ENCODE measurements at regions of chr3 and their contacts with region 1.

Region 1: DNA sequence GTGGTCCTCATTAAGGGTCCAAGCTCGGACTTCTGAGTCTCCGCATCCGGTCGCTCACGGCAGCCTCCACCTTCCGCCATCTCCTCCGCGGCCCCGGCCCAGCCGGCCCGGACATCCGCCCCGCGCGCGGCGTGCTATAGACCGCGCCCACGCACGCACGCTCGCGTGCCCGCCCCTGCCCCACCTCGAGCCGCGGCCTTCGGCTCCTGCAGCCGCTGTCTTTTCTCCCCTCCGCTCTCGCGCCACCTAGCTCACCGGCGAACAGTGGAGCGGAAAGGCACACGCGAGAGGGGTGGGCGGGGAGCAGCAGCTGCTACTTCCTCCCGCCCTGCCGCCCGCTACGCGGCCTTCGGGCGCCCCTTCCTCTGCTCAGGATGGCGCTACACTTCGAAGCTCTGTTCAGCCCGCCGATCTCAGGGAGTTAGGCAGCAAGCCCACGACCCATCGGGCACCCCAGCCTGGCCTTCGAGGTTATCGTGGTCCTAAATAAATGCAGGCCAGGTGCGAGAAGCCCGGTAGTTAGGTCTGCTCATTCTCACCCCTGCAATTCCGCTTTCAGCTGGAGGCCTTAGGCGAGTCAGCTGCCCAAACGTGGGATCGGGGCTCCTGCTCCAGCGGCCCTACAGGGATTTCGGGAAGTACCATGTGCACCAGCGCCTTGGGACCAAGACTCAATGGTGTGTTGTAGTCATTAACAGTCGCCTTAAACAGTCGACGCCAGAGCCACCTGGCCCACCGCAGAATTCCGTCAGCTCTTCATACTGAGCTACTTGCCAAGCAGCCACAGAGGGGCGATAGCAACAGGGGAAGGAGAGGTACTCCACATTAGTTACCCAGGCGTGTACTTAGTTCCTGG is at the start of gene USP4:
- DNase-seq: peak; percentile 93
- H3K4me3 Mint-ChIP-seq: peak within 1 kb of the TSS; percentile 92
- H3K27ac Mint-ChIP-seq: peak within 1 kb of the TSS; percentile 100
- H3K4me1 Mint-ChIP-seq: peaks cover 45% of the 10 kb centered on the region
- H3K27me3 Mint-ChIP-seq: no peaks in the 10 kb centered on the region
- total RNA-seq, gene USP4: 84.4 and 90.2 TPM in 2 replicates

Region 2: DNA sequence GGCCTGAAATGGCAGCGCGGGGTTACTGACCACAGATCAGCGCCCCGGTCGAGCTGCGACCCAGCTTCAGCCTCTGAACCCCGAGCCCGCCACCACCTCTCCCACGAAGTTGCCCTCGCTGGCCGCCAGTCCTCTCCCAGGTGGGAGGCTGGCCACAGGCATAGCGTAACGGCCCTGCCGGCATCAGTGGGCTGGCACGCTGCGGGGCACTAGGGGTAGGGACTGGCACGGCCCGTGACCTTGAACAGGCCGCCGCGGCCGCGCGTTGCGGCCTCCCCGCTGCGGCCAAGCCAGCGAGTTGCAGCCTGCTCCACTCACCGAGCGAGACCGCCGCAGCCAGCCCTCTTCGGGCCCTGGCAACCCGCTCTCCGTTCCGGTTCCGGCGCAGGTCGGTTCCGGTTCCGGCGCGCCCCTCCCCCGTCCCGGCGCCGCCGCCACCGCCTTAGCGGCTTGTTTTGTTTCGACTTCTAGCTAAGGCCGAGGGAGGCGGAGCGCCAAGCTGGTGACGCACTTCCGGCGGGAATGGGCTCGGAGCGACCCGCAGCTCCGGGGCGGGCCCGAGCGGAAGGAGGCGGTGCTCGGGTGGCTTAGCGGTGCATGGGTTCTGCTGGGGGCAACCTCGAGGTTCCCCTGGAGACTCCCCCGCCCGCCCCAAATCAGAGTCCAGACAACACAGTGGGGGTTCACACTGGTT is 219.6 kb before region 1 on chr3 and contains the start of gene USP19:
- intact Hi-C with region 1: loop called (anchors 2 kb)
- DNase-seq: peak; percentile 94
- H3K4me3 Mint-ChIP-seq: peak within 1 kb of the TSS; percentile 90
- H3K27ac Mint-ChIP-seq: peak within 1 kb of the TSS; percentile 88
- H3K4me1 Mint-ChIP-seq: peaks cover 10% of the 10 kb centered on the region
- H3K27me3 Mint-ChIP-seq: peaks cover 1% of the 10 kb centered on the region
- total RNA-seq, gene USP19: 57.7 and 59.7 TPM in 2 replicates

Region 3: GRCh38 chr3:49295489-49296058 is 44.6 kb before region 1 on chr3:
- intact Hi-C with region 1: loop called (anchors 2 kb)
- DNase-seq: peak; percentile 9
- H3K4me3 Mint-ChIP-seq: no peak overlapping the region
- H3K27ac Mint-ChIP-seq: no peak overlapping the region
- H3K4me1 Mint-ChIP-seq: peaks cover 3% of the 10 kb centered on the region
- H3K27me3 Mint-ChIP-seq: no peaks in the 10 kb centered on the region

Region 4: DNA sequence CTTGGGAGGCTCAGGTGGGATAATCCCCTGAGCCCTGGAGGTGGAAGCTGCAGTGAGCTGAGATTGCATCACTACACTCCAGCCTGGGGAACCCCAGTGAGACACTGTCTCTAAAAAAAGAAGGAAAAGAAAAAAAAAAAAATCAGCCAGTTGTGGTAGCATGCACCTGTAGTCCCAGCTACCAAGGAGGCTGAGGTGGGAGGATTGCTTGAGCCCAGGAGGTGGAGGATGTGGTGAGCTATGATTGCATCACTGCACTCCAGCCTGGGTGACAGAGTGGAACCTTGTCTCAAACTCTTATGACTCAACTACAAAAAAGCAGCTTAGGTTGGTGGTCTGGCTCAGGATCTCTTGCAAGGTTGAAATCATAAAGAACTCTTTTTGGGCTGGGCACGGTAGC is 37.3 kb after region 1 on chr3:
- intact Hi-C with region 1: loop called (anchors 2 kb)
- DNase-seq: peak; percentile 49
- H3K4me3 Mint-ChIP-seq: peak overlapping the region; percentile 19
- H3K27ac Mint-ChIP-seq: peak overlapping the region; percentile 82
- H3K4me1 Mint-ChIP-seq: peaks cover 16% of the 10 kb centered on the region
- H3K27me3 Mint-ChIP-seq: no peaks in the 10 kb centered on the region

Region 5: GRCh38 chr3:49428697-49429100 is 88.5 kb after region 1 on chr3:
- intact Hi-C with region 1: loop called (anchors 1 kb)
- DNase-seq: no peak
- H3K4me3 Mint-ChIP-seq: peak overlapping the region; percentile 96
- H3K27ac Mint-ChIP-seq: peak overlapping the region; percentile 94
- H3K4me1 Mint-ChIP-seq: peaks cover 23% of the 10 kb centered on the region
- H3K27me3 Mint-ChIP-seq: no peaks in the 10 kb centered on the region

Region 6: GRCh38 chr3:49469936-49470713 is 130.0 kb after region 1 on chr3 and contains the start of gene DAG1:
- intact Hi-C with region 1: loop called (anchors 1 kb)
- DNase-seq: peak; percentile 96
- H3K4me3 Mint-ChIP-seq: peak within 1 kb of the TSS; percentile 92
- H3K27ac Mint-ChIP-seq: peak within 1 kb of the TSS; percentile 88
- H3K4me1 Mint-ChIP-seq: peaks cover 23% of the 10 kb centered on the region
- H3K27me3 Mint-ChIP-seq: no peaks in the 10 kb centered on the region
- total RNA-seq, gene DAG1: 20.5 and 23.7 TPM in 2 replicates

Region 7: DNA sequence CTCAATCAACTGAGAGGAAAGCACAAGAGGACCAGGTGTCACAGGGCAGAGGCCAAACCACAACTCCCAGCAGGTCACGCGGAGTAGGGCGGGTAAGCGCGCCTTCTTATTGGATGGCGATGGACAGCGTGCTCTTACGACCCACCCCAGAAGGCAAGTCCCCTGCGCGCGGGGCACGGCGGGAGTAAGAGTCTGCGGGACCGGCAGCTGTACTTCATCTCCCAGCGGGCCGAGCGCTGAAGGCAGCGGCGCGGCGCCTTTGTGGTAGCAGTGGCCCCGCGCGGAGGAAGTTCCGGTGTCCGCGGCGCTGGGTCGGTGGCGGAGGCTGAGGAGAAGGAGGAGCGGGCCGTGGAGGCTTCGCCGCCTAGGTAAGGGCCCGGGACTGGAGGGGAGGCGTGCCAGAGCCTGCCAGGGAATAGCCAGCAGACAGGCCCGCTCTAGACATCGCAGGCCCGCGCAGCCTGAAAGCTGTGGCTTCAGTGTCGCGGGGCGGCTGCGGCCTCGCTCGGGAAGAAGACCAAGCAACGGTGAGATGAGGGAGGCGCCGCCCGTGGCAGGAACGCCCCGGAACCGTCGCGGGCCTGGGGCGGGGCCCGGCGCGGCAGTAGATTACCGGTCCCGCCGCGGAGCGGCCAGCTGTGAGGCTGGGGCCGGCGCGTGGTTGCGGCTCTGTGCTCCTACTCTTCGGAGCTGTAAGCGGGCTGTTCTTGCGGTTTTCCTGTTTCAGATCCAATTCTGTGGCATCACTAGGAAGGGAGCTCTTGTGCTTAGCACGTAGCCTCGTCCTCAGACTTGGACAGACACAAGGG is 599.9 kb after region 1 on chr3 and contains the start of gene RBM6:
- intact Hi-C with region 1: no loop called
- DNase-seq: peak; percentile 95
- H3K4me3 Mint-ChIP-seq: peak within 1 kb of the TSS; percentile 97
- H3K27ac Mint-ChIP-seq: peak within 1 kb of the TSS; percentile 98
- H3K4me1 Mint-ChIP-seq: peaks cover 22% of the 10 kb centered on the region
- H3K27me3 Mint-ChIP-seq: no peaks in the 10 kb centered on the region
- total RNA-seq, gene RBM6: 99.0 and 100 TPM in 2 replicates

Region 8: DNA sequence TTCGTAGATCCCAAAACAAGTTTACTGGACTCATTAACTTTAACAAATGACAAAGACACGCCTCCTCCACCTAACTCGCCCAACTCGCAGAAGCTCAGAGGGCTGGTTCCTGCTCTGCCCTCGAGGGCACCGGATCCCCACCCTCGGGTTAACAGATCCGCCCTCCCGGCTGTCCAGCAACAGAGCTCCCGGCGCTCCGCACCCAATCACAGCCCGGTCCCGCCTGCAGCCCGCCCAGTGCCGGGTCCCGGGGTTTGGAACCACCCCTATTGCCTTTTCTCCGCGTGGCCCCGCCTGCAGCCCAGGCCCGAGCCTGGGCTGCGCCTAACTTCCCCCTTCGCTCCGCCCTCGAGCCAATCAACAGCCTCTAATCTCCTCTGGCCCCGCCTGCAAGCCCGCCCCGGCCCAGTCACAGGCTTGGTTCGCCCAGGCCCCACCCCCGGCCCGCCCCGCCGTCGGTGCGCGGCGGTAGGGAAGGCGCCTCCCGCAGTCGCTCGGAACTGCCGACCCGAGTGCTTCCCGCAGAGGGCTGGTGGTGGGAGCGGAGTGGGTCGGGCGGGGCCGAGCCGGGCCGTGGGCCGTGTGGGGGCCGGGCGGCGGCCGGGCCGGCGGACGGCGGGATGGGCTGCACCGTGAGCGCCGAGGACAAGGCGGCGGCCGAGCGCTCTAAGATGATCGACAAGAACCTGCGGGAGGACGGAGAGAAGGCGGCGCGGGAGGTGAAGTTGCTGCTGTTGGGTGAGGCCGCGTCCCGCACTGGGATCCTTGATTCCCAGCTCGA is 895.7 kb after region 1 on chr3 and contains the start of gene GNAI2:
- intact Hi-C with region 1: loop called (anchors 5 kb)
- DNase-seq: peak; percentile 99
- H3K4me3 Mint-ChIP-seq: peak within 1 kb of the TSS; percentile 99
- H3K27ac Mint-ChIP-seq: peak within 1 kb of the TSS; percentile 94
- H3K4me1 Mint-ChIP-seq: peaks cover 32% of the 10 kb centered on the region
- H3K27me3 Mint-ChIP-seq: no peaks in the 10 kb centered on the region
- total RNA-seq, gene GNAI2: 237 and 238 TPM in 2 replicates

Measured in activated T-helper 1 cell treated with anti-CD3 and anti-CD28 coated beads, Interleukin-12 subunit alpha, Interleukin-12 subunit beta, Interleukin-2, Interleukin-4 antibody, amounts not matched to agents 30 ng/mL and 10 ng/mL and 1 ng/mL, durations not matched to agents 14 hours and 24 hours and 36 hours (primary cell).